GM13976 (cell line): ENCODE measurements at regions of chr5 and their contacts with region 1.

Region 1: GRCh38 chr5:66769839-66770617 is 173.8 kb downstream of the MAST4 start:
- DNase-seq: no peak
- CTCF ChIP-seq: peak; percentile 7

Region 2: DNA sequence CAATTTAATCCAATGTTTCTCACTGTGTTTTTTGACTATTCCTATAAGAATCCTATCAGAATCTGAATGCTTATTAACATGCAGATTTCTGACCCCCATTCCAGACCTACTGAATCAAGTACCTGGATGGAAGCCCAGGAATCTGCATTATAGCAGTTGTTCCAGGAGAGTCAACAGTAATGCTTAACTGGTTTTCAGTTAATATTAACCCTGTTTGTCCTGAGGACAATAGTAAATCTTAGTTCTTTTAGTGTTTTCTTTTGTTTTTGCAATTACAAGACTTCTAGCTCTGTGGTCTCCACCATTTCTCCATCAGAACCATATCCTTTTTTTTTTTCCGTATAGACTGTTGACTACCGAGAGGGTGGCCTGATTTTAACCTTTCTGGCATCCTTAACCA is 457.7 kb before region 1 on chr5:
- in situ Hi-C with region 1: loop called (anchors 10 kb)
- DNase-seq: no peak
- CTCF ChIP-seq: no peak

Region 3: DNA sequence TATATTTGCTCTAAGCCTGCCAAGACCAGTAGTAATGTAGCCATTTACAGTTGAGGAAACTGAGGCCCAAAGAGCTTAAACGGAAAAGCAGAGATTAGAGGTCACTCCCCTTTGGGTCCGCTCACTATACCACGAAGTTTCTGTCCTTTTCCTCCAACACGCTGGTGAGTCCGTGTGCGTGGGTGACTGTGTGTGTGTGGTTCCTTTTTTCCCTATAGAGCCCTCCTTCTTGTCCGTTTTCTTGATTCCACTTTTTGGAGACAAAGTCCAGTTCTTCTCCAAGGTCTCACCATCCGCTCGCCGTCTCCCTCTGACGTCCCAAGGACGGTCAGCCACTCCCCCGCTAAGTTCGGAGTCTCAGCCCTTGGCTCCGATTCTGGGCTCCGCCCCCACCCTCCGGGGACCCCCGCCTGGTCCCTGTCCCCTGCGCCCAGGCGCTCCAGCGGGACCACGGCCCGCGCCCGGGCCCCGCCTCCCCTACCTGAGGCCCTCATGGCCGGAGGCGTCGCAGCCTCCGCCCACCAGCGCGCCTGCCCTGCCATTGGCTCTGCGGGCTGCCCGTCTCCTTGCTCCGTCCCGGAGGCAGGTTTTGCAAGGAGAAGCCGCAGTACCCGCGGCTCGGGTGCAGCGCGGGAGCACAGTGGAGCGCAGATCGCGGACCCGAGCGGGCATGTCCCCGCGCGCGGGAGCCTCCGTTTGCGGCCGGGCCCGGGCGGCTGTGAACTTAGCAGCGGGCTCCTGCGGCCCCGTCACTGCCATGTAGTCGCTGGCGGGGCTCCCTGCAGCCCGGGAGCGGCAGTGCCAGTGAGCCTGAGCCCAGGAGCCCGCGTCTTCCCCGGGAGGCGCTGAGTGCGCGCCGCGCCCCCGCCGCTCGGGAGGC is 174.0 kb before region 1 on chr5 and contains the start of gene MAST4:
- in situ Hi-C with region 1: no loop called
- DNase-seq: peak; percentile 91
- CTCF ChIP-seq: no peak

Region 4: DNA sequence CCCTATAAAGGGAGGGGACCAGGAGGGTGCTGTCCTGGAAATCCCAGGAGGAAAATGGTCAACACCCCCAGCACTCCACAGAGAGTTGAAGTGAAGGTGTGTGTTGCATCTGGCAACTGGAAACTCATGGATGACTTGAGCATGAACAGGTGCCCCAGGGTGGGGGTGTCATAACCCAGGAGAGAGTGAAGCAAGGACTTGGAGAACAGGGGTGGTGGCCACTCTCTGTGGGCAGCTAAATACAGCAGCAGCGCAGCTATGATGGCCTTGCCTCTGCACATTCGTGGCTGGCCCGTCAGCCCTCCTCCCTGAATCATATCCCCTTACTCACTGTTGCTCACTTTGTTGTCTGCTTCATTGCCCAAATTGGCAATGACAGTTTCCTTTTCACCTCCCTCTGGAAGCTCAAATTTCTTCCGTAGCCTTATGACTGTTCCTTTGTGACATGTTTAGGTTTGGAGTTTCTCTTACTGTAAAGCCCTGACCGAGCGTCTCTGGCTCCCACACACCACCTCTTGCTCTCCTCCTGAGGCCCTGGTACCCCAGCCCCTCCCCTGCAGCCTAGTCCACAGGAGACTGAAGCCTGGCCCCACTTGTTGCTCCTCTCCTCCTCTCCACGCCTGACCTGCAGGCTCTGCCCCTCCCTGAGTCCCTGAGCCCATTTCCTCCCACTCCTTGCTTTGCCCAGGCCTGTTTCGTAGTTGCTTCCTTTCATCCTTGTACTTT is 240.8 kb after region 1 on chr5:
- in situ Hi-C with region 1: no loop called
- DNase-seq: no peak
- CTCF ChIP-seq: no peak